Left cardiac atrium (tissue), 4 donors: ENCODE measurements at regions of chr1 and their contacts with region 1.

Region 1: DNA sequence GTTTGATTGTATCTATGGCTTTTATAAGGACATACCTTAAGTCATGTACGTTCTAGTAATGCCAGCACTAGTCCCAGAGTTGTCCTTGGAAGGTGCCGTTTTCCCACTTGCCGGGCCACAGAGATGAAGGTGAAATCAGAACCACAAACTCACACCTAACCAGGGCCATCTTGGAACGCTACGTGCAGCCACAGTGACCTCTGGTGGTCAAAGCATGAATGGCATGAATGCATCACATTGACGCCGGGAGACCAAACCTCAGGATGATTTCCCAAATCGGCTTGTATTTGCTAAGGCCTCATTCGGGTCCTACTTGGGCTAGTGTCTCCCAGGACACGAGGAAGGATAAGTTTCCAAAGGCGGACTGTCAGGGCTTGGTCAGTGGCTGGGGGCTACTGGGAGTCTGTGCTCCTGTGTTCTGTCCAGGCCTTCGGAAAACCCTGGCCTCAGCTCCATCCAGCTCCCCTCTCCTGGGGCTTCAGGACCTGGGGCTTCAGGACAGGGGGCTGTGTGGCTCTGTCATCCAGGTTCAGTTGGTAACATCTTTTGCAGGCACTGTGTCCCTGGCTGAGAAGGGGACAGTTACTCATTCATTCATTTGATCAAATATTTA is 260.5 kb downstream of the PRDM2 start:
- DNase-seq: peak; percentile 64
- ATAC-seq: peak; percentile 53 to 74

Region 2: DNA sequence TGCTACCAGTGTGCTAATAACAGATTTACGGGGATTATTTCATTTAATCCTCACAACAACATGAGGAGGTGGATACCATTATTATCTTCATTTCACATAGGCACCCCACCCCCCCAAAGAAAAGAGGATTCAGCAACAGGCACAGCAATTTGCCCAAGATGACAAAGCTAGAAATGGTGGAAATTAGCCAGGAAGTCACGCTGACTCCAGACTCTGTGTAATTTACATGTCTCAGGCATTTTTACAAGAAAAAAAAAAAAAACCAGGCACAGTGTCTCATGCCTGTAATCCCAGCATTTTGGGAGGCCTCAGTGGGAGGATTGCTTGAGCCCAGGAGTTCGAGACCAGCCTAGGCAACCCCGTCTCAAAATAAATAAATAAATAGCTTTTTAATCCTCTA is 298.0 kb before region 1 on chr1:
- intact Hi-C with region 1: loop called (anchors 1 to 5 kb)
- DNase-seq: no peak
- ATAC-seq: peak in 1 of 2 donors; percentile 23

Region 3: DNA sequence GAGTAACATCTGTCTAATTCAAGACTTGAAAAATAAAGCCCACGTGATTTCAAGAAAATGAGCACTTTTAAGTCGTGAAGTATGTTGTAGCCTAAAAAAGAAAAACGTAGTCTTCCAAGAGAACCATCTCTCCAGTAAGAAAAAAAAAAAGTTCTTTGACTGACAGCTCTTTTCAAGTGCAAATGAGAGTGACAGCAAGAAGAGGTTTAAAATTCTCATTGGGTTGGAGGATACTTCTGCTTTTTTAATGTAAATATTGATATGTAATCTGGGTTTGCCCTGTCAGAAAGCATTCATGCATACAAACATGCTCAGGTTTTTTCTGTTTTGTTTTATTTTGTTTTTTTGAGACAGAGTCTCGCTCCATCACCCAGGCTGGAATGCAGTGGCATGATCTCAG is 292.8 kb before region 1 on chr1:
- intact Hi-C with region 1: loop called (anchors 1 to 5 kb)
- DNase-seq: no peak
- ATAC-seq: no peak

Region 4: DNA sequence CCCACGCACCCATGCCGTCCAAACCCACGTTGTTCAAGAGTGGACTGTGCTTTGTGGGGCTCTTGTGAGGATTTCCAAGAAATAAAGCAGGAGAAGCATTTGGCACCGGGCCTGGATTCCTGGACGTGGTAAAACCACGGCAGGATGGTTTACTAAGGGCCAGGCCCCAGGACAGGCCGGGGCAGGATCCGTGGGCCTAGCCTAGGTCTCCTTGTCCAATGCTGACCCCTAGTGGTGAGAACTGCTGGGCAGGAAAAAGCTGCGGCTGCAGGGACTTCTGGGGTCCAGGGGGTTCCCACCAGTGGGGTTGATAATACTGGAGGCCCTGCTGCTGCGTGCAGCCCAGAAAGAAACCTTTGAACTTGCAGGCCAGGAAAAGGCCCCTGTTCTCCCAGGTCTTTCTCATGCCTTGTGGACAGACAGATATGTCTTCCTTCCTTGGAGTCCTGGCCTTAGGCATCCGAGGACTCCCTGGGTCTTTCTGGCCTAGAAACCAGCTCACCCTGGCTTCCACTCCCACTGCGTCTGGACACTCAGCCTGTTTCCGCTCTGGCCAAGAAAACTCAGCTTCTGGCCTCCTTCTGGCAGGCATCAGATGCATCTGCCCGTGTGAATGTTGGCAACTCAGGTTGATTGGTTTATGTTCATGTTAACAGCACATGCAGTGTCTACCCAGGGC is 1086.1 kb after region 1 on chr1:
- intact Hi-C with region 1: loop called in 1 of 2 experiments (anchors 10 kb)
- DNase-seq: peak; percentile 78
- ATAC-seq: peak; percentile 78 to 84